Heart left ventricle (tissue), 16 donors: ENCODE measurements at regions of chr7 and their contacts with region 1.

Region 1: DNA sequence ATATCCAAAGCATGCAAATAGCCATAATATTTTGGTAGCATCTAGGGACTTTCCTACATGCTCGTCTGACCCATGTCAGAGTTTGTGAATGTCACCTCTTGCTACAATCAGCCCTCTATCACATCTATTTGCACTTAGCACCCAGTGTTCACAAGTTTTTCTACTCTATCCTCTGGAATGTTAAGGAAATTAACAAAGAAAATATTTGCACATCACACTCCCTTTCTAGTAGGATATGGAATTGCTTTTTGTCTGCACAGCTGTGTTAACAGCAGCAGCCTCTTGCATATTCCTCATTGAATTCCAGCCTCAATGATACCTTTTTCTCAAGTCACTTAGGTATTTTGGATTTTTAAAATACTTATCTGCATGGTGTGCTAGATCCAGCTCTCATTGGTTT is 403.1 kb upstream of the SEMA3C start:
- DNase-seq: no peak
- ATAC-seq: no peak
- H3K4me3 ChIP-seq: no peak overlapping the region
- H3K27ac ChIP-seq: no peak overlapping the region
- H3K4me1 ChIP-seq: no peaks in the 10 kb centered on the region
- H3K27me3 ChIP-seq: no peaks in the 10 kb centered on the region
- CTCF ChIP-seq: no peak
- POLR2A ChIP-seq: no peak

Region 2: GRCh38 chr7:81273601-81274397 is 48.1 kb before region 1 on chr7:
- intact Hi-C with region 1: loop called in 1 of 10 experiments (anchors 5 kb)
- DNase-seq: no peak
- ATAC-seq: no peak
- H3K4me3 ChIP-seq: no peak overlapping the region
- H3K27ac ChIP-seq: no peak overlapping the region
- H3K4me1 ChIP-seq: no peaks in the 10 kb centered on the region
- H3K27me3 ChIP-seq: no peaks in the 10 kb centered on the region
- CTCF ChIP-seq: no peak
- POLR2A ChIP-seq: no peak

Region 3: DNA sequence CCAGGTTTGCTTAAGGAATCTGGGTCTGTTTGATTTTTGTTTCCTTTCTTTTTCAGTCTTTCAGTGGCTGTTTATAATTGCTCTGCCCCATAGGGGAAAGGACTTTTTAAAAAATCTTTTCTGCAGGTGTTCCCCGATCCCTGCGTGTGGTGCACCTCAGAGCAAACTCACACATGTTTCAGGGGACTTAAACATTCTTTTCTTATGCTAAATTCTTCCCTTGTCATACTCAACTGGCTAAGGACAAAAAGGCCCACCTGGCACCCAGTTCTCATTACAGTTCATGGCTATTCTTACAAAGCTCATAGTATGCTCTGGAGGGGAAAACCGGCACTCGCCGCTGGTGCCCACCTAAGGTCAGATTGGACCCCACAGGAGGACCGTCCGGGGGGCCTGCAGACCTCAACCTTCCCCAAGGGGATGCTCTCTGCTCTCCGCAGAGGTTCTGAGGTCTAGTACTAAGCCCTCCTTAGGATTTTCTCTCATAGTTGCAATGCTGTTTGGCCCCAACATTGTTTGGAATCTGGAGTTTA is 227.6 kb after region 1 on chr7:
- intact Hi-C with region 1: no loop called
- DNase-seq: no peak
- ATAC-seq: no peak
- H3K4me3 ChIP-seq: no peak overlapping the region
- H3K27ac ChIP-seq: no peak overlapping the region
- H3K4me1 ChIP-seq: no peaks in the 10 kb centered on the region
- H3K27me3 ChIP-seq: no peaks in the 10 kb centered on the region
- CTCF ChIP-seq: no peak
- POLR2A ChIP-seq: no peak